ENCODE measurements at regions of chrX and their contacts with region 1.

Region 1: GRCh38 chrX:3811331-3812311 is 98.2 kb upstream of the PRKX start:
- DNase-seq: peak; percentile 54
- H3K4me3 Mint-ChIP-seq: peak overlapping the region; percentile 9
- H3K27ac Mint-ChIP-seq: no peak overlapping the region
- H3K4me1 Mint-ChIP-seq: peaks cover 11% of the 10 kb centered on the region
- H3K27me3 Mint-ChIP-seq: peaks cover 3% of the 10 kb centered on the region

Region 2: GRCh38 chrX:3037218-3037617 is 774.4 kb before region 1 on chrX:
- CTCF ChIA-PET with region 1: no interaction called
- intact Hi-C with region 1: loop called (anchors 1 kb)
- DNase-seq: no peak
- H3K4me3 Mint-ChIP-seq: no peak overlapping the region
- H3K27ac Mint-ChIP-seq: no peak overlapping the region
- H3K4me1 Mint-ChIP-seq: no peaks in the 10 kb centered on the region
- H3K27me3 Mint-ChIP-seq: peaks cover 3% of the 10 kb centered on the region

Region 3: GRCh38 chrX:3516051-3516541 is 295.5 kb before region 1 on chrX:
- CTCF ChIA-PET with region 1: no interaction called
- intact Hi-C with region 1: loop called (anchors 1 kb)
- DNase-seq: no peak
- H3K4me3 Mint-ChIP-seq: no peak overlapping the region
- H3K27ac Mint-ChIP-seq: no peak overlapping the region
- H3K4me1 Mint-ChIP-seq: no peaks in the 10 kb centered on the region
- H3K27me3 Mint-ChIP-seq: no peaks in the 10 kb centered on the region

Region 4: GRCh38 chrX:3651276-3651675 is 160.3 kb before region 1 on chrX:
- CTCF ChIA-PET with region 1: interaction called, 11 read pairs
- intact Hi-C with region 1: loop called (anchors 1 kb)
- DNase-seq: no peak
- H3K4me3 Mint-ChIP-seq: no peak overlapping the region
- H3K27ac Mint-ChIP-seq: no peak overlapping the region
- H3K4me1 Mint-ChIP-seq: no peaks in the 10 kb centered on the region
- H3K27me3 Mint-ChIP-seq: no peaks in the 10 kb centered on the region

Region 5: DNA sequence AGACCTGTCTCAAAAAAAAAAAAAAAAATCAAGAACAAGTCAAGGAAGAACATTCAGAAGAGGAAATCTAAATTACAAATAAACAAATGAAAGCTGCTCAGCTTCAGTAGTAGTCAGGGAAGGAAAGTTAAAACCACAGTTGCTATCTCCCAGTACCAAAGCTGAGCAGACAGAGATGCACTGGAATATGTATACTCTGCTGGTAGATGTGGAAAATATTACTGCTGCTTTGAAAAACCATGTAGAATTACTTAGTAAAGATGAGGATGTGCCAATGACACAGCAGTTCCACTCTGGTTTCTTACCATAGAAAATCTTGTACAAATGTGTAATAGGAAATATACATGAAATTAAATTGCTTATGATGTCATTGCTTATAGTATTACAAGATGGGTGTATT is 73.1 kb before region 1 on chrX:
- CTCF ChIA-PET with region 1: interaction called, 3 read pairs
- intact Hi-C with region 1: loop called (anchors 2 kb)
- DNase-seq: peak; percentile 13
- H3K4me3 Mint-ChIP-seq: no peak overlapping the region
- H3K27ac Mint-ChIP-seq: peak overlapping the region; percentile 81
- H3K4me1 Mint-ChIP-seq: peaks cover 14% of the 10 kb centered on the region
- H3K27me3 Mint-ChIP-seq: no peaks in the 10 kb centered on the region

Measured in activated naive CD4-positive, alpha-beta T cell treated with anti-CD3 and anti-CD28 coated beads for 36 hours (primary cell).